ENCODE measurements at regions of chr2 and their contacts with region 1.

Region 1: DNA sequence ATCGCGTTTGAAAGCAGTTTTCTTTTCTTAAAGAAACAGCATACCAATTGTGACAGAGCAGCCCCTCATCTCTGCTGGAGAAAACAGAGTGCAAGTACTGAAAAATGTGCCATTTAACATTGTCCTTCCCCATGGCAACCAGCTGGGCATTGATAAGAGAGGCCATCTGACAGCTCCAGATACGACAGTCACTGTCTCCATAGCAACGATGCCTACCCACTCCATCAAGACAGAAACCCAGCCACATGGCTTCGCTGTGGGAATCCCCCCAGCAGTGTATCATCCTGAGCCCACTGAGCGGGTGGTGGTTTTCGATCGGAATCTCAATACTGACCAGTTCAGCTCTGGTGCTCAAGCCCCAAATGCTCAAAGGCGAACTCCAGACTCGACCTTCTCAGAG is 9.5 kb downstream of the GRHL1 start:
- DNase-seq: peak; percentile 88
- H3K4me3 ChIP-seq: no peak overlapping the region
- H3K27ac ChIP-seq: no peak overlapping the region; a peak in 1 of 4 replicates
- H3K4me1 ChIP-seq: peaks cover 0 to 9% of the 10 kb centered on the region in 2 experiments; a peak in 2 of 4 replicates
- H3K27me3 ChIP-seq: no peaks in the 10 kb centered on the region
- CTCF ChIP-seq: no peak
- EP300 ChIP-seq: no peak
- RAD21 ChIP-seq: no peak

Region 2: GRCh38 chr2:9975805-9976447 is 14.9 kb after region 1 on chr2:
- CTCF ChIA-PET with region 1: interaction called, 107 read pairs
- POLR2A ChIA-PET with region 1: no interaction called
- DNase-seq: no peak
- H3K4me3 ChIP-seq: no peak overlapping the region
- H3K27ac ChIP-seq: peak overlapping the region in 1 of 2 experiments; percentile 57; a peak in 2 of 4 replicates
- H3K4me1 ChIP-seq: peaks cover 4 to 34% of the 10 kb centered on the region in 2 experiments; a peak in 3 of 4 replicates
- H3K27me3 ChIP-seq: no peaks in the 10 kb centered on the region
- CTCF ChIP-seq: no peak
- EP300 ChIP-seq: peak in 1 of 2 experiments; percentile 86; a peak in 1 of 4 replicates
- RAD21 ChIP-seq: no peak

Measured in SK-N-SH (cell line).